ENCODE measurements at regions of chr7 and their contacts with region 1.

Region 1: GRCh38 chr7:101410743-101411507 is 48.2 kb downstream of the COL26A1 start:
- DNase-seq: peak; percentile 28 to 29
- ATAC-seq: peak in 6 of 8 donors; percentile 25 to 67 (median 47)
- H3K4me3 ChIP-seq: no peak overlapping the region
- H3K27ac ChIP-seq: no peak overlapping the region
- H3K4me1 ChIP-seq: peaks cover 0 to 7% (median 0%) of the 10 kb centered on the region in 9 donors
- H3K27me3 ChIP-seq: peaks cover 0 to 32% (median 12%) of the 10 kb centered on the region in 7 donors
- CTCF ChIP-seq: peak; percentile 55 to 90 (median 74)

Region 2: GRCh38 chr7:101273206-101273605 is 137.7 kb before region 1 on chr7:
- intact Hi-C with region 1: no loop called
- DNase-seq: no peak
- ATAC-seq: no peak
- H3K4me3 ChIP-seq: no peak overlapping the region
- H3K27ac ChIP-seq: no peak overlapping the region
- H3K4me1 ChIP-seq: no peaks in the 10 kb centered on the region
- H3K27me3 ChIP-seq: peaks cover 0 to 49% (median 17%) of the 10 kb centered on the region in 7 donors
- CTCF ChIP-seq: no peak

Region 3: GRCh38 chr7:101363734-101364374 is 47.1 kb before region 1 on chr7:
- intact Hi-C with region 1: loop called in 4 of 10 experiments (anchors 5 to 10 kb)
- DNase-seq: peak; percentile 31 to 66
- ATAC-seq: peak; percentile 90 to 95 (median 92)
- H3K4me3 ChIP-seq: peak overlapping the region; percentile 48 to 64 (median 58)
- H3K27ac ChIP-seq: peak overlapping the region in 1 of 10 donors; percentile 43
- H3K4me1 ChIP-seq: peaks cover 0 to 21% (median 16%) of the 10 kb centered on the region in 9 donors
- H3K27me3 ChIP-seq: peaks cover 0 to 74% (median 41%) of the 10 kb centered on the region in 7 donors
- CTCF ChIP-seq: peak; percentile 83 to 99 (median 94)

Measured in heart right ventricle (tissue), 16 donors.